ENCODE measurements at regions of chr6 and their contacts with region 1.

Region 1: DNA sequence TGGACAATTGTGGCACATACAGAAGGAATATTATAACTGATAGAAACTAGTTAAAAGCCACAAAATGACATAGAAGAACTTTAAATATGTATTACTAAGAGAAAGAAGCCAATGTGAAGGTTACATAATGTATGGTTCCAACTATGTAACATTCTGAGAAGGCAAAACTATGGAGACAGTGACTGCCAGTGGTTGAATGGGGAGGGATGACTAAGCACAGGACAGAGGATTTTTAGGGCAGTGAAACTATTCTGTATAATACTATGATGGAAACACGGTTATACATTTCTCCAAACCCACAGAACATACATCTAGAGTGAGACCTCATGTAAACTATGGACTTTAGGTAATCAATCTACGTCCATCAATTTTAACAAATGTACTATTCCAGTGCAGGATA is 22.4 kb downstream of the SYNCRIP start:
- DNase-seq: no peak
- H3K4me3 Mint-ChIP-seq: no peak overlapping the region
- H3K27ac Mint-ChIP-seq: peak overlapping the region; percentile 15
- H3K4me1 Mint-ChIP-seq: peaks cover 32% of the 10 kb centered on the region
- H3K27me3 Mint-ChIP-seq: no peaks in the 10 kb centered on the region

Region 2: GRCh38 chr6:85600713-85601313 is 19.5 kb before region 1 on chr6:
- intact Hi-C with region 1: loop called (anchors 1 kb)
- DNase-seq: no peak
- H3K4me3 Mint-ChIP-seq: no peak overlapping the region
- H3K27ac Mint-ChIP-seq: no peak overlapping the region
- H3K4me1 Mint-ChIP-seq: no peaks in the 10 kb centered on the region
- H3K27me3 Mint-ChIP-seq: no peaks in the 10 kb centered on the region

Measured in activated T-helper 1 cell treated with anti-CD3 and anti-CD28 coated beads, Interleukin-12 subunit alpha, Interleukin-12 subunit beta, Interleukin-2, Interleukin-4 antibody, amounts not matched to agents 30 ng/mL and 10 ng/mL and 1 ng/mL, durations not matched to agents 14 hours and 24 hours and 36 hours (primary cell).